Ascending aorta (tissue), 2 donors: ENCODE measurements at regions of chr9 and their contacts with region 1.

Region 1: DNA sequence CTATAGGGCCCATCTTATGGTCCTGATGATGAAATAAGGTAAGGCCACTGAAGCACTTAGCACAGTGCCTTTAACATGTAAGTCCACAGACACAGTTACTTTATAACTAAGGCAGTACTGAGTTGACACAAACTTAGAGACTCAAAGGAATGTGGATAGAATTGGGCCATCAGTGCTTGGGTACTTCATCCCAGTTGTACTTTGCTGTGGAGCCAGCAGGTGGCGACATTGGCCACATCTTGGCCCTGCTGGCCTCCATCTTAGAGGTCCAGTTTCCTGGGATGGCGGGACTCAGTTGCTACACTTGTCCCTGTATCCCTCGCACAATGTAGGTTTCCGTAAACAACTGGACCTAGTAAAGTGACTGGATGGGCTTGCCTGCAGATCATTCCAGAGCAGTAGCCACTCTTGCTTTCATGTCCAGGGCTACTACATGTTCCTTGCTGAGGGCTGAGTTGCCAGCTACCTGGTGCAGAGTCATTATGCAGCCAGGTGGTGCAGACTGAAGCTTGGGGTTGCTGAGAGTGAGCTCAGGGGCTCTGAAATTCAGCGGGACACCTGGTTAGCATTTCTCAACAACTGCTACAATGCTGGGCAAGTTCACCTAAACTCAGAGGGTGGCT is 10.6 kb downstream of the MTAP start:
- DNase-seq: peak in 1 of 2 donors; percentile 73
- H3K4me3 ChIP-seq: no peak overlapping the region
- H3K27ac ChIP-seq: no peak overlapping the region
- H3K4me1 ChIP-seq: peaks cover 0 to 4% of the 10 kb centered on the region in 2 donors
- H3K27me3 ChIP-seq: no peaks in the 10 kb centered on the region
- CTCF ChIP-seq: peak; percentile 62 to 77 (median 77)

Region 2: DNA sequence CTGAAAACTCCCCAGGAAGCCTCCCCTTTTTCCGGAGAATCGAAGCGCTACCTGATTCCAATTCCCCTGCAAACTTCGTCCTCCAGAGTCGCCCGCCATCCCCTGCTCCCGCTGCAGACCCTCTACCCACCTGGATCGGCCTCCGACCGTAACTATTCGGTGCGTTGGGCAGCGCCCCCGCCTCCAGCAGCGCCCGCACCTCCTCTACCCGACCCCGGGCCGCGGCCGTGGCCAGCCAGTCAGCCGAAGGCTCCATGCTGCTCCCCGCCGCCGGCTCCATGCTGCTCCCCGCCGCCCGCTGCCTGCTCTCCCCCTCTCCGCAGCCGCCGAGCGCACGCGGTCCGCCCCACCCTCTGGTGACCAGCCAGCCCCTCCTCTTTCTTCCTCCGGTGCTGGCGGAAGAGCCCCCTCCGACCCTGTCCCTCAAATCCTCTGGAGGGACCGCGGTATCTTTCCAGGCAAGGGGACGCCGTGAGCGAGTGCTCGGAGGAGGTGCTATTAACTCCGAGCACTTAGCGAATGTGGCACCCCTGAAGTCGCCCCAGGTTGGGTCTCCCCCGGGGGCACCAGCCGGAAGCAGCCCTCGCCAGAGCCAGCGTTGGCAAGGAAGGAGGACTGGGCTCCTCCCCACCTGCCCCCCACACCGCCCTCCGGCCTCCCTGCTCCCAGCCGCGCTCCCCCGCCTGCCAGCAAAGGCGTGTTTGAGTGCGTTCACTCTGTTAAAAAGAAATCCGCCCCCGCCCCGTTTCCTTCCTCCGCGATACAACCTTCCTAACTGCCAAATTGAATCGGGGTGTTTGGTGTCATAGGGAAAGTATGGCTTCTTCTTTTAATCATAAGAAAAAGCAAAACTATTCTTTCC is 161.7 kb after region 1 on chr9:
- intact Hi-C with region 1: no loop called
- DNase-seq: peak in 1 of 2 donors; percentile 65
- H3K4me3 ChIP-seq: peak overlapping the region; percentile 47 to 58
- H3K27ac ChIP-seq: no peak overlapping the region
- H3K4me1 ChIP-seq: peaks cover 0 to 8% of the 10 kb centered on the region in 2 donors
- H3K27me3 ChIP-seq: peaks cover 38% of the 10 kb centered on the region
- CTCF ChIP-seq: no peak

Region 3: DNA sequence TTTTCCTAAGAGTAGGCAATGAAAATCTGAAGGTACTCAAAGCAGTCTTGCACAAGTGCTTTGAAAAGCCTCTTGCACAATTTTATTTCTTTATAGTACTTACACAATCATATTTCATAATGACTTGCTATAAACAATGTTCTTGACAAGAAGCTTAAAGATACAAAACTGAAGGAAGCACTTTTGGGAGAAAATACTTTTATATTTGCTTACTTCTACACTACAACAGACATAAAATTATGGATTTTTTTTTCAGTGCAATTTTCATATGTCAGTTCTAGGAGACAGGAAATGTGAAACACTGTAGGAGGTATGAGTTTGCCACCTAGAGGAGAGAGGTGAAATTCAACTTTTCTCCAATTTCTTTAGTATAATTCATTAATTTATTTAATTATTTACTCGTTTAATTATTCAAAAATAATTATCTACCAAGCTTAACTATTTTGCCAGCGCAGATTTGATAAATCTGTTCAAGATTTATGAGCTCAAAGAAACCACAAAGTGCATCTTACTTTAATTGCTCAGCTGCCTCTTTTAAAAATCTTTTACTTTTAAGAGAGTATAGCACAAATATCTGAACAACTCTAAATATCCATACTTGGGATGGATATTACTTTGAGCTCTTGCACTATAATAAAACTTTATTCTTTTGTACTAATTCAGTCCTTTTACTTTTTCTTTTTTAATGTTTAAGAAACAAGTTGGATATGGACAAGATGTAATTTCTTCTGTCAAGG is 225.1 kb after region 1 on chr9:
- intact Hi-C with region 1: loop called (anchors 1 kb)
- DNase-seq: no peak
- H3K4me3 ChIP-seq: no peak overlapping the region
- H3K27ac ChIP-seq: no peak overlapping the region
- H3K4me1 ChIP-seq: no peaks in the 10 kb centered on the region
- H3K27me3 ChIP-seq: no peaks in the 10 kb centered on the region
- CTCF ChIP-seq: peak in 2 of 3 experiments; percentile 37 to 50

Region 4: DNA sequence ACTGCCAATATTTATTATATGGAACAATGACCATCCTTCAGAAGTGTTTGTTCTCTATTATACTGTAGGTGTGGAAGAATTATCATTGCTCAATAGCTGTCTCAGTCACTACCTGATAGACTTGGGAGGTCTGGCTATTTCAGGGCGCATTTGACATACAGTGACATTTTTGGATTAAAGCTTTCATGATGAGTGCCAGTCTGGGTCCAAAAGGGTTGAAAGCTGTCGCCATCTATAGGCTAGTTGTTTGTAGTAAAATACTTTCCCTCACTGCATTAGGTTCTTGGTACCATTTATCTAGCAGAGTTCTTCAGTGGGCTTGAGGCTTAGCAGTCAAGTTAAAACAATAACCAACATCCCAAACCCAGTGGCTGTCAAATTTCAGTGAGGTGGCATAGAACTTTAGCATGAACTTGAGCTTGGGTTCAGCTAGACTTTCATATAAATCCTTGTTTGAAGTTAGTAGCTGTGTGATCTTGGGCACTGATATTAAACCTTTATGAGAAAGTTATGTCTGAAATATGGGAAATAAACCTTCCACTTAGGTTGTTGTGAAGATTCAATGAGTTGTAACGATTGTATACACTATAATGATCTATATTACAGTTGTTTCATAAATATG is 306.6 kb after region 1 on chr9:
- intact Hi-C with region 1: loop called (anchors 1 kb)
- DNase-seq: no peak
- H3K4me3 ChIP-seq: no peak overlapping the region
- H3K27ac ChIP-seq: no peak overlapping the region
- H3K4me1 ChIP-seq: no peaks in the 10 kb centered on the region
- H3K27me3 ChIP-seq: no peaks in the 10 kb centered on the region
- CTCF ChIP-seq: peak in 2 of 3 experiments; percentile 26 to 51

Region 5: DNA sequence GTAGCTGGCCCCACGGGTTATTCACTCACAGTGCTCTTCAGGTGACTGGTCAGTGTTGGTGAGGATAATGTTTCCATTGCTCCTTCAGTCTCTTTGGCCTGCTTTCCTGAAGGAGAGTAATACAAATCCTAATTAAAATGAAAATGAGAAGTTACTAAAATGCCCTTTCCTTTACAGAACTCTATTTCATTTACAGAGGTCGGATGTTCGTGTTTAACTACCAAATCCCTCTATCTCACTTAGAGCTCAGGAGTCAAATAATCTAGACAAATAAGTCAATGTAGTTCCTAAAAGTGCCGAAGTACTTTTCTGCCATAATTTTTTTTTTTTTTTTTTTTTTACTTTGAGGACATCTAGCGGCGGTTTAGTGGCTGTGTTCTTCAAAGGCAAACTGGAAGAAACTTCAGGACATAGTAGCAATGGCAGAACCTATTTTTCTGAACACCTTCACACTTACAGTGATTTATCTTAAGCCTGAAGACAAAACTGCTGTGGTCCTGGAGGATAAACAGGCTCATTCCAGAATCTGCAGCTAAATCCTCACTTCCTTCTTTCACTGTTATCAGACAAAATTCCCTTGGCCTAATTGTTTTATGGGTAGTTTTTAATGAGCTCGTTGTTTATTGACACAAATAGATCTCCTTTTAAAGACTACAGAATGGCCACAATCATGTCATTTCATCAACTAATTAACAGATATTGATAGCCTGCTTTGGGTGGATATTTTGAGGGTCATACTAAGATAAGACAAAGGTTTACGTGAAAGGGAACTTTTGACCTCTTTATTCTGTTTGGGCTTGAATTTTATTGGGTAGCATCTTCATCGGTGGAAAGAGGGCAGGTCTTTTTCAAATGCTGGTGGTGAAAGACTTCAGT is 426.0 kb after region 1 on chr9:
- intact Hi-C with region 1: loop called (anchors 2 kb)
- DNase-seq: no peak
- H3K4me3 ChIP-seq: no peak overlapping the region
- H3K27ac ChIP-seq: no peak overlapping the region
- H3K4me1 ChIP-seq: peaks cover 0 to 3% of the 10 kb centered on the region in 2 donors
- H3K27me3 ChIP-seq: no peaks in the 10 kb centered on the region
- CTCF ChIP-seq: peak in 1 of 3 experiments; percentile 39

Region 6: GRCh38 chr9:22452415-22453010 is 639.5 kb after region 1 on chr9:
- intact Hi-C with region 1: loop called (anchors 5 kb)
- DNase-seq: no peak
- H3K4me3 ChIP-seq: no peak overlapping the region
- H3K27ac ChIP-seq: no peak overlapping the region
- H3K4me1 ChIP-seq: peaks cover under 1 to 3% of the 10 kb centered on the region in 2 donors
- H3K27me3 ChIP-seq: no peaks in the 10 kb centered on the region
- CTCF ChIP-seq: peak in 2 of 3 experiments; percentile 66 to 72